Activated B cell treated with CpG ODN at 0.5 μM for 24 hours (primary cell): ENCODE measurements at regions of chr17 and their contacts with region 1.

Region 1: DNA sequence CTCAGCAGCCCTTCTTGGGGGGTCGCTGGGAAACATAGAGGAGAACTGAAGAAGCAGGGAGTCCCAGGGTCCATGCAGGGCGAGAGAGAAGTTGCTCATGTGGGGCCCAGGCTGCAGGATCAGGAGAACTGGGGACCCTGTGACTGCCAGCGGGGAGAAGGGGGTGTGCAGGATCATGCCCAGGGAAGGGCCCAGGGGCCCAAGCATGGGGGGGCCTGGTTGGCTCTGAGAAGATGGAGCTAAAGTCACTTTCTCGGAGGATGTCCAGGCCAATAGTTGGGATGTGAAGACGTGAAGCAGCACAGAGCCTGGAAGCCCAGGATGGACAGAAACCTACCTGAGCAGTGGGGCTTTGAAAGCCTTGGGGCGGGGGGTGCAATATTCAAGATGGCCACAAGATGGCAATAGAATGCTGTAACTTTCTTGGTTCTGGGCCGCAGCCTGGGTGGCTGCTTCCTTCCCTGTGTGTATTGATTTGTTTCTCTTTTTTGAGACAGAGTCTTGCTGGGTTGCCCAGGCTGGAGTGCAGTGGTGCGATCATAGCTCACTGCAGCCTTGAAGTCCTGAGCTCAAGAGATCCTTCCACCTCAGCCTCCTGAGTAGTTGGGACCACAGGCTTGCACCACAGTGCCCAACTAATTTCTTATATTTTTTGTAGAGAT is 3.4 kb downstream of the STH start:
- DNase-seq: peak; percentile 60
- ATAC-seq: peak; percentile 95
- H3K4me3 Mint-ChIP-seq: no peak overlapping the region
- H3K27ac Mint-ChIP-seq: no peak overlapping the region
- H3K4me1 Mint-ChIP-seq: peaks cover 2% of the 10 kb centered on the region
- H3K27me3 Mint-ChIP-seq: no peaks in the 10 kb centered on the region
- CTCF ChIP-seq: peak; percentile 74

Region 2: GRCh38 chr17:46026166-46027047 is 24.0 kb after region 1 on chr17:
- CTCF ChIA-PET with region 1: interaction called, 3 read pairs
- POLR2A ChIA-PET with region 1: no interaction called
- intact Hi-C with region 1: loop called (anchors 2 kb)
- DNase-seq: no peak
- ATAC-seq: peak; percentile 58
- H3K4me3 Mint-ChIP-seq: no peak overlapping the region
- H3K27ac Mint-ChIP-seq: peak overlapping the region; percentile 86
- H3K4me1 Mint-ChIP-seq: peaks cover 72% of the 10 kb centered on the region
- H3K27me3 Mint-ChIP-seq: no peaks in the 10 kb centered on the region
- CTCF ChIP-seq: no peak

Region 3: GRCh38 chr17:46061435-46061834 is 59.0 kb after region 1 on chr17:
- CTCF ChIA-PET with region 1: no interaction called
- POLR2A ChIA-PET with region 1: no interaction called
- intact Hi-C with region 1: loop called (anchors 2 kb)
- DNase-seq: no peak
- ATAC-seq: no peak
- H3K4me3 Mint-ChIP-seq: no peak overlapping the region
- H3K27ac Mint-ChIP-seq: no peak overlapping the region
- H3K4me1 Mint-ChIP-seq: no peaks in the 10 kb centered on the region
- H3K27me3 Mint-ChIP-seq: no peaks in the 10 kb centered on the region
- CTCF ChIP-seq: no peak

Region 4: DNA sequence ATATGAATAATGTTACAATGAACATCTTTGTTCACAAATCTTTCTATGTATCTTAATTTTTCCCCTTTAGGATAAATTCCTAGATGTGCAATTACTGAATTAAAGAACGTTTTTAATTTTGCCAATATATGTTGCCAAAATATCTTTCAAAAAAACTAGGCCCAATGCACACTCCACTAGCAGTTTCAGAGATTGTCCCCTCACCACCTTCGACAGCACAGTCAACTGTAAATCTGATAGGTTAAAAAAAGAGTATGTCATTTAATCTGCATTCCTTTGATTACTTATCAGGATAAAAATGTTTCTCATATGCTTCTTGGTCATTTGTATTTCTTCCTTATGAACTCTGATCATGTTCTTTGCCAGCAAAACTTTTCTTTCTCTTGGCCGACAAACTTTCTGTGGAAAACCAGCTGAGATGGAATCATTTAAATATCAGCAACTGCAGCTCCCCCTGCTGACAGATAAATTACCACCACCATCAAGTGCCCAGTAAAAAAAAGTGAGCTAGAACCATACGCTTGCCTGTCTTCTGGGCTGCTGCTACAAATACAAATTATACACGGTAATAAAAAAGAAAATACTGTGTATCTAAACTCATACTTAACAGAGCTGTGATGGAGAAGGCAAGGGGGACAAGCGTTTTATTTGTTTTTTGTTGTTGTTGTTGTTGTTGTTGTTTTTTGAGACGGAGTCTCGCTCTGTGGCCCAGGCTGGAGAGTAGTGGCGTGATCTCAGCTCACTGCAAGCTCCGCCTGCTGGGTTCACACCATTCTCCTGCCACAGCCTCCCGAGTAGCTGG is 210.4 kb after region 1 on chr17:
- CTCF ChIA-PET with region 1: interaction called, 67 read pairs
- POLR2A ChIA-PET with region 1: no interaction called
- intact Hi-C with region 1: loop called (anchors 2 kb)
- DNase-seq: no peak
- ATAC-seq: peak; percentile 77
- H3K4me3 Mint-ChIP-seq: no peak overlapping the region
- H3K27ac Mint-ChIP-seq: no peak overlapping the region
- H3K4me1 Mint-ChIP-seq: peaks cover 7% of the 10 kb centered on the region
- H3K27me3 Mint-ChIP-seq: no peaks in the 10 kb centered on the region
- CTCF ChIP-seq: peak; percentile 63